ENCODE measurements at regions of chr6 and their contacts with region 1.

Region 1: DNA sequence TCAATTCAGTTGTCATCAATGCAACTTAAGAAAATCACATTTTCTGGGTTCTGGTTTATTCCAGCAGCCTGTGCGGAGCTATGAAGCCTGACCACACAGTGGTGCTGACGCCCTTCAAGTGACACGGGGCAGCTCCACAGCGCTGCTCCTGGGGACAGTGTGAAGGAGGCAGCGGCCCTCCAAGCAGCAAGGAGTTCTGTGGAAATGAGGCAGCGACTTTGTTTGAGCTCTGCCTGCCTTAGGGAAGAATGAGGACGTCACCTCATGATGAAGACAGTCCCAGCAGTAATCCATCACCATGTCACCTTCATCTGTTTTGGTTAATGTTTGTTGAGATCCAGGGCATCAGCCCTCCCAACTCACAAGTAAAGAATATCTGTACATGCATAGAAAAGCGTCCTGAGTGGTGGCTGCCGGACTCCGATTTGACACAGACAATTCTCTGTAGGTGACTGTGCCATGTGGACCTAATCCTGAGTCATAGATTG is 168.5 kb upstream of the UST start:
- DNase-seq: peak; percentile 89 to 92
- ATAC-seq: peak; percentile 95
- H3K4me3 ChIP-seq: no peak overlapping the region
- H3K27ac ChIP-seq: no peak overlapping the region
- H3K4me1 ChIP-seq: peaks cover 0 to 2% of the 10 kb centered on the region in 2 donors
- H3K27me3 ChIP-seq: peaks cover 0 to 4% of the 10 kb centered on the region in 2 donors

Region 2: GRCh38 chr6:148530394-148530953 is 47.8 kb before region 1 on chr6:
- intact Hi-C with region 1: no loop called
- DNase-seq: no peak
- ATAC-seq: peak; percentile 44
- H3K4me3 ChIP-seq: peak overlapping the region in 1 of 2 donors; percentile 54
- H3K27ac ChIP-seq: peak overlapping the region; percentile 16 to 80
- H3K4me1 ChIP-seq: peaks cover 0 to 6% of the 10 kb centered on the region in 2 donors
- H3K27me3 ChIP-seq: no peaks in the 10 kb centered on the region

Region 3: DNA sequence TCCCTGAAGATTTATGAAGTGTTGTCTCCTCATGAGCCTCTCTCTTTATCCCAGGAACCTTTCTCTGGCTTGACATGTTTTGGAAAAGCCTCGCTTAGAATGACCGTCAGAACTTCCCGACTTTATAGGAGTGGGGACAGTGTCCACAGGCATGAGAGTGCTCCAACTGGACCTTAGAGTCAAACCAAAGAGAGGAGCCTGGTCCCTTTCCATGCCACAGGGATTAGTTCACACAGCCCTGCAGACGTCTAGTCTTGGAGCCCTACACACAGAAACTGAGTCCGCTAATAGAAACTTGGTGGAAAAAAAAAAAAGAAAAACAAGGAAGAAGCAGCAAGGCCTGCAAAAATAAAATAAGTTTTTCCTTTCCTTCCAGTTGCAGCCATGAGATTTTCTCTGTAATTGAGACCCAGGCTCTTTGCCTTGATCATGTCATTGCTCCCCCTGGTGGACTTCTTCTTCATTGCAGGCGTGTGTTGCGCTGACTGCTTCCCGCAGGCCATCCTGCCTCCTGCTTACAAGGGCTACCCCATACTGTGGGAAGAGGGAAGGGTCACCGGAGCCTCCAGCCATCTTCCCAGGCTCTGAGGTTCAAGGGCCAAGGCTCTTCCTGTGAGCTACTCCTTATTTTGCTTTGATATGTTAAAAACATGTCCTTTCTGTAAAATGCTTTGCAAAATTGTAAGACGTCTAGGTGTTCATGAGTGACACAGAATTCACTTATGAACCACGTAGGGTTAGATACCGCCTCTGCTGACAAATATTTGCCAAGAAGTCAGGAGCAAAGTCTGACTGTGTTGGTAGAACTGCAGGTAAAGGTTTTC is 369.5 kb after region 1 on chr6:
- intact Hi-C with region 1: loop called (anchors 2 to 5 kb)
- DNase-seq: peak; percentile 88 to 92
- ATAC-seq: peak; percentile 94
- H3K4me3 ChIP-seq: no peak overlapping the region
- H3K27ac ChIP-seq: no peak overlapping the region
- H3K4me1 ChIP-seq: peaks cover 0 to 3% of the 10 kb centered on the region in 2 donors
- H3K27me3 ChIP-seq: no peaks in the 10 kb centered on the region

Region 4: DNA sequence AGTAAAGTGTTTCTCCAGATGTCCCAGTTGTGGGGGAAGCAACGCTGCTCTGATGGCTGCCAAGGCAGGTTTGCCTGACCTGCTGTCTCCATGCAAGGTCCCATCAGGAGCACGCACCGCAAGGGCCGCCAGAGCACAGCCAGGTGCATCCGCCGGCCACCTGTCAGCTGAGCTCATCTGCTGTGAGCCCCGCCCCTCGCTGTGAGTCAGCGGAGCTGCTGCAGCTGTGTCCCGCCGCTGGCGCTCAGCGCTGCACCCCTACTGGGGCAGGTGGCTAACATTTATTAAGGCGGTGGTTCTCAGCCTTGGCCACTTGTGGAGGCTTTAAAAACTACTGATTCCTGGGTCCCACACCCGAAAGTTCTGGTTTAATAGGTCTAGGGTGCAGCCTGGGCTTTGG is 394.2 kb after region 1 on chr6:
- intact Hi-C with region 1: loop called in 1 of 2 experiments (anchors 5 kb)
- DNase-seq: no peak
- ATAC-seq: no peak
- H3K4me3 ChIP-seq: no peak overlapping the region
- H3K27ac ChIP-seq: no peak overlapping the region
- H3K4me1 ChIP-seq: peaks cover 0 to 6% of the 10 kb centered on the region in 2 donors
- H3K27me3 ChIP-seq: no peaks in the 10 kb centered on the region

Region 5: GRCh38 chr6:149028767-149029405 is 450.6 kb after region 1 on chr6:
- intact Hi-C with region 1: loop called in 1 of 2 experiments (anchors 5 kb)
- DNase-seq: peak in 1 of 2 donors; percentile 62
- ATAC-seq: peak; percentile 83
- H3K4me3 ChIP-seq: no peak overlapping the region
- H3K27ac ChIP-seq: no peak overlapping the region
- H3K4me1 ChIP-seq: peaks cover 0 to 3% of the 10 kb centered on the region in 2 donors
- H3K27me3 ChIP-seq: no peaks in the 10 kb centered on the region

Region 6: GRCh38 chr6:149431905-149432775 is 853.9 kb after region 1 on chr6:
- intact Hi-C with region 1: loop called in 1 of 2 experiments (anchors 5 kb)
- DNase-seq: peak; percentile 93 to 96
- ATAC-seq: peak; percentile 92
- H3K4me3 ChIP-seq: no peak overlapping the region
- H3K27ac ChIP-seq: no peak overlapping the region
- H3K4me1 ChIP-seq: no peaks in the 10 kb centered on the region
- H3K27me3 ChIP-seq: no peaks in the 10 kb centered on the region

Measured in aorta (tissue), 5 donors.